Panc1 (cell line): ENCODE measurements at regions of chr12 and their contacts with region 1.

Region 1: GRCh38 chr12:120971299-120972179 is 6.8 kb upstream of the HNF1A start:
- DNase-seq: peak; percentile 52
- ATAC-seq: peak; percentile 89
- H3K4me3 ChIP-seq: no peak overlapping the region
- H3K27ac ChIP-seq: no peak overlapping the region
- H3K4me1 ChIP-seq: peaks cover 4% of the 10 kb centered on the region; the same call in 1 of the 2 replicates
- H3K27me3 ChIP-seq: no peaks in the 10 kb centered on the region
- CTCF ChIP-seq: no peak; the same call in none of the 2 replicates

Region 2: GRCh38 chr12:120762086-120762485 is 209.5 kb before region 1 on chr12:
- CTCF ChIA-PET with region 1: no interaction called
- POLR2A ChIA-PET with region 1: no interaction called
- in situ Hi-C with region 1: no loop called
- intact Hi-C with region 1: loop called (anchors 10 kb)
- DNase-seq: no peak
- ATAC-seq: no peak
- H3K4me3 ChIP-seq: no peak overlapping the region
- H3K27ac ChIP-seq: no peak overlapping the region
- H3K4me1 ChIP-seq: no peaks in the 10 kb centered on the region
- H3K27me3 ChIP-seq: no peaks in the 10 kb centered on the region
- CTCF ChIP-seq: no peak

Region 3: GRCh38 chr12:120856980-120857379 is 114.6 kb before region 1 on chr12:
- CTCF ChIA-PET with region 1: no interaction called
- POLR2A ChIA-PET with region 1: no interaction called
- in situ Hi-C with region 1: no loop called
- intact Hi-C with region 1: loop called (anchors 5 kb)
- DNase-seq: no peak
- ATAC-seq: 0 out of 2 replicates have a peak, but pooled peaks have one; percentile 75
- H3K4me3 ChIP-seq: no peak overlapping the region
- H3K27ac ChIP-seq: no peak overlapping the region
- H3K4me1 ChIP-seq: no peaks in the 10 kb centered on the region
- H3K27me3 ChIP-seq: no peaks in the 10 kb centered on the region
- CTCF ChIP-seq: peak; percentile 74